ENCODE measurements at regions of chr18 and their contacts with region 1.

Region 1: DNA sequence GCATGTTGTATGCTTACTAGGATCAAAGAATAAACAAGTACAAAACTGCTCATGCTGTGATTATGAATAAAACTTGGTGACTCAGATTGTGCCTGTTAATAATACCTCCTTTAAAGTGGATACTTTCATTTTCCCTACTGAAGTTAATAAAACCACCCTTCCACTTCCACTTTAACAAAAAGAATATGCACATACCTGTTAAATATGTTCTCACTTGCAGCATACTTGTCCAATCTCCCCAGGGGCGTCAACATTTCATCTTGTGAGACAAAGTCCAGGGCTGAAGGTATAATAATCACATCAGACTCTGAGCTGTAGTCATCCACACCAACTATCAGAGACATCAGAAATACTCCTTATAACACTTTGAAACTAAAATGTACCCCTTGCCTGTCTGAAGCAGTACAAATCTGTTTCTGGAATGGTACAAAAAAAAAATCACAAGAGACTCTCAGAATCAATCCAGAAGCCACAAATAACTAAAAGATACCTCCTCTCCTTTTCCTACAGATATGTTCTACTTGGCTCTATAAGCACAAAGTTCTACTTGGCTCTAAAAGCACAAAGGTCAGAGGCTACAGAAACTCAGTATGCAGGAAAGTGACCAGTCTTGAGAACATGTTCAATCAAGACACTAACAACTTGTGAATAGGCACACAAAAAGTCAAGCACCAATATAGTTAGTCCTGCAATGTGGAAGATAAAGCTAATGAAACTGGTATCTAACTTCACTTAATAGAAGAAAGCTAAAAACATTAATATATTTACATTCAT is 19.3 kb downstream of the PPP4R1 start:
- DNase-seq: no peak
- ATAC-seq: peak in 1 of 4 donors; percentile 34
- H3K4me3 ChIP-seq: no peak overlapping the region
- H3K27ac ChIP-seq: peak overlapping the region in 1 of 12 donors; percentile 38
- H3K4me1 ChIP-seq: peaks cover 0 to 34% (median 12%) of the 10 kb centered on the region in 12 donors
- H3K27me3 ChIP-seq: no peaks in the 10 kb centered on the region
- CTCF ChIP-seq: no peak
- POLR2A ChIP-seq: no peak

Region 2: GRCh38 chr18:9943311-9943710 is 348.3 kb after region 1 on chr18:
- intact Hi-C with region 1: loop called in 1 of 10 experiments (anchors 10 kb)
- DNase-seq: no peak
- ATAC-seq: peak in 3 of 4 donors; percentile 41 to 57 (median 53)
- H3K4me3 ChIP-seq: no peak overlapping the region
- H3K27ac ChIP-seq: no peak overlapping the region
- H3K4me1 ChIP-seq: peaks cover 0 to 10% (median 0%) of the 10 kb centered on the region in 12 donors
- H3K27me3 ChIP-seq: no peaks in the 10 kb centered on the region
- CTCF ChIP-seq: no peak
- POLR2A ChIP-seq: no peak